ENCODE measurements at regions of chr16 and their contacts with region 1.

Region 1: GRCh38 chr16:78503602-78504001 is 404.1 kb downstream of the WWOX start:
- DNase-seq: peak; percentile 26 to 33
- ATAC-seq: no peak
- H3K4me3 ChIP-seq: no peak overlapping the region
- H3K27ac ChIP-seq: peak overlapping the region in 1 of 4 donors; percentile 72
- H3K4me1 ChIP-seq: peaks cover 21 to 23% of the 10 kb centered on the region in 2 donors
- H3K27me3 ChIP-seq: no peaks in the 10 kb centered on the region
- CTCF ChIP-seq: peak; percentile 83 to 88 (median 87)
- POLR2A ChIP-seq: no peak

Region 2: GRCh38 chr16:78628461-78629045 is 125.0 kb after region 1 on chr16:
- in situ Hi-C with region 1: no loop called
- intact Hi-C with region 1: loop called (anchors 5 kb)
- DNase-seq: no peak
- ATAC-seq: no peak
- H3K4me3 ChIP-seq: no peak overlapping the region
- H3K27ac ChIP-seq: peak overlapping the region in 1 of 4 donors; percentile 45
- H3K4me1 ChIP-seq: peaks cover 14 to 29% of the 10 kb centered on the region in 2 donors
- H3K27me3 ChIP-seq: no peaks in the 10 kb centered on the region
- CTCF ChIP-seq: no peak
- POLR2A ChIP-seq: no peak

Region 3: GRCh38 chr16:78684040-78684611 is 180.5 kb after region 1 on chr16:
- in situ Hi-C with region 1: loop called in 1 of 4 experiments (anchors 10 kb)
- intact Hi-C with region 1: loop called (anchors 2 kb)
- DNase-seq: peak; percentile 78 to 88
- ATAC-seq: peak; percentile 93 to 97
- H3K4me3 ChIP-seq: no peak overlapping the region
- H3K27ac ChIP-seq: peak overlapping the region; percentile 68 to 73 (median 70)
- H3K4me1 ChIP-seq: peaks cover 6 to 23% of the 10 kb centered on the region in 2 donors
- H3K27me3 ChIP-seq: no peaks in the 10 kb centered on the region
- CTCF ChIP-seq: no peak
- POLR2A ChIP-seq: no peak

Region 4: GRCh38 chr16:78770353-78771091 is 266.9 kb after region 1 on chr16:
- in situ Hi-C with region 1: loop called (anchors 5 to 10 kb)
- intact Hi-C with region 1: loop called (anchors 1 kb)
- DNase-seq: peak; percentile 33 to 58
- ATAC-seq: peak; percentile 58 to 79
- H3K4me3 ChIP-seq: no peak overlapping the region
- H3K27ac ChIP-seq: no peak overlapping the region
- H3K4me1 ChIP-seq: peaks cover 3 to 13% of the 10 kb centered on the region in 2 donors
- H3K27me3 ChIP-seq: no peaks in the 10 kb centered on the region
- CTCF ChIP-seq: peak; percentile 66 to 93 (median 85)
- POLR2A ChIP-seq: no peak

Region 5: DNA sequence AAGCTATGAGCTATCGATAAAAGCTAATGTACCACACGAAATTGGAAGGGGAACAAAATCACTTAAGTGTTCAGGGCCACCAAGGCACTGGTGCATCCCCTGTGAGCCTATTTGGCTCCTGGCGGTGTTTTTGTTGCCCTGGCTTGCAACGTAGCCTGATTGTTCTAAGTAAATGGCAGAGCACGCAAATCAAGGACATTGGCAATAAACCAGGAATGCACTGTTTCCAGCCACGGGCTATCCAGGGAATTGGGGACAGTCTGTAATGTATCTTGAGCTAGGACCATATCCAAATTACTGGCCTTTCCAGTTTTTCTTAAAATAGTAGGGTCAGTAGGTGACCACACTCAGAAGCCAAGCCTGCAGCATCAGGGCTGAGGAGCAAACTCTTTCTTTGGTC is 362.9 kb after region 1 on chr16:
- in situ Hi-C with region 1: no loop called
- intact Hi-C with region 1: loop called (anchors 10 kb)
- DNase-seq: peak in 1 of 2 donors; percentile 8
- ATAC-seq: peak; percentile 72 to 89
- H3K4me3 ChIP-seq: peak overlapping the region in 2 of 4 donors; percentile 4 to 34
- H3K27ac ChIP-seq: peak overlapping the region in 1 of 4 donors; percentile 13
- H3K4me1 ChIP-seq: peaks cover 14 to 15% of the 10 kb centered on the region in 2 donors
- H3K27me3 ChIP-seq: no peaks in the 10 kb centered on the region
- CTCF ChIP-seq: no peak
- POLR2A ChIP-seq: no peak

Region 6: GRCh38 chr16:79047229-79047983 is 543.8 kb after region 1 on chr16:
- in situ Hi-C with region 1: no loop called
- intact Hi-C with region 1: loop called (anchors 5 kb)
- DNase-seq: no peak
- ATAC-seq: no peak
- H3K4me3 ChIP-seq: no peak overlapping the region
- H3K27ac ChIP-seq: no peak overlapping the region
- H3K4me1 ChIP-seq: no peaks in the 10 kb centered on the region
- H3K27me3 ChIP-seq: no peaks in the 10 kb centered on the region
- CTCF ChIP-seq: peak in 1 of 5 experiments; percentile 38
- POLR2A ChIP-seq: no peak

Measured in gastrocnemius medialis (tissue), 4 donors.